Breast epithelium (tissue), 4 donors: ENCODE measurements at regions of chr3 and their contacts with region 1.

Region 1: DNA sequence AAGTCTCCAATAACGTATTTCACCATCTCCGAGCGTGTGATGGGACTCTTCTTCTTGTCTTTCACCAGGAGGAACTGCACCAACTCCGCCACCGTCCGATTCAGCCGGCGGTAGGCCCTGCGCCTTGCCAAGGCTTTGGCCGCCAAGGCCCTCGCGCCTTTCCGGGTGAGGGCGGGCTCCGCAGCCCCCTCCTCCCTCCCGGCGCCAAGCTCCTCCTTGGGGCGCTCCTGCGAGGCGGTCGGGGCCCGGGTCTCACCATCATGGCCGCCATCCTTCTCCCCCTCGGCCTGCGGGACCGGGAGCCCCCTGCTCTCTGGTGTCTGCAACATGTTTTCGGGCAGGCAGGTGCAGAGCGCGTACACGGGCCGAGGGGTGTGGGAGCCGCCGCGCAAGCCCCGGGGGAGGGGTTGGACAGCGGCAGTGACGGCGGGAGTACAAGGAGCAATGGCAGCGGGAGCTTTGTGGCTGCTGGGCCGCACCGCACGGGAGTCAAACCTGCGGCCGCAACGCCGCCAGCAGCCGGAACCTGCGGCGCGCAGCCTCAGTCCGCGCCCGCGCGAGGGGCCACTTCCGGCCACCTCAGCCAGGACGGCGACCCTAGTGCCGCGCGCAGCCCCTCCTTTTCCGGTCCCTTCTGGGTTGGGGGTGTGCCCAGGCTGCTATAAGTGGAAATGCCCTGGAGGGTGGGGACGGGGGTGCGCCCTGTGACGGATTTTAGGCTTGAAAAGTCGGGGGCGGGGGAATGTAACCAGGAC is at the start of gene MAGEF1:
- DNase-seq: peak; percentile 68 to 75
- H3K4me3 ChIP-seq: peak within 1 kb of the TSS; percentile 84 to 92 (median 85)
- H3K27ac ChIP-seq: peak within 1 kb of the TSS; percentile 94 to 96
- H3K4me1 ChIP-seq: no peaks in the 10 kb centered on the region
- H3K27me3 ChIP-seq: no peaks in the 10 kb centered on the region
- CTCF ChIP-seq: no peak
- POLR2A ChIP-seq: no peak
- total RNA-seq, gene MAGEF1: 16.5 to 40.4 (median 38.3) TPM

Region 2: GRCh38 chr3:184211297-184211696 is 500.4 kb before region 1 on chr3:
- intact Hi-C with region 1: loop called (anchors 5 kb)
- DNase-seq: no peak
- H3K4me3 ChIP-seq: no peak overlapping the region
- H3K27ac ChIP-seq: no peak overlapping the region
- H3K4me1 ChIP-seq: no peaks in the 10 kb centered on the region
- H3K27me3 ChIP-seq: peaks cover 5 to 6% of the 10 kb centered on the region in 2 donors
- CTCF ChIP-seq: no peak
- POLR2A ChIP-seq: no peak

Region 3: DNA sequence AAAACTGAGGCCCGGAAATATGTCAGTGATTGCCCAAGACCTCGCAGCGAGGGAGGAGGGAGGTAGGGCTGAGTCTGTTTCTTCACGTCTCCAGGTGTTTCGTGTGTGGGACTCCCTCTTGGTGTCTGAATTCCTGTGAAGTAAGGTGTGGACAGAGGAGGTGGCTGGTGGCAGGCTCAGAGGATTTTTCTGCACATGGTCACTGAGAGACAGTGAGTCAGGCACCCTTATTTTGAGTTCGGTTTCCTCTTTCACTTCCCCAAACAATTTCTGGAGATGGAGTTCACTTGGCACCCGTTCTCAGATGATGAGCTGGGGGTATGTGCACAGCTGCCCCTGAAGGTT is 54.0 kb after region 1 on chr3:
- intact Hi-C with region 1: no loop called
- DNase-seq: no peak
- H3K4me3 ChIP-seq: no peak overlapping the region
- H3K27ac ChIP-seq: no peak overlapping the region
- H3K4me1 ChIP-seq: no peaks in the 10 kb centered on the region
- H3K27me3 ChIP-seq: no peaks in the 10 kb centered on the region
- CTCF ChIP-seq: no peak
- POLR2A ChIP-seq: no peak